Activated T-helper 1 cell treated with anti-CD3 and anti-CD28 coated beads, Interleukin-12 subunit alpha, Interleukin-12 subunit beta, Interleukin-2, Interleukin-4 antibody, amounts not matched to agents 30 ng/mL and 10 ng/mL and 1 ng/mL, durations not matched to agents 14 hours and 24 hours and 36 hours (primary cell): ENCODE measurements at regions of chr7 and their contacts with region 1.

Region 1: DNA sequence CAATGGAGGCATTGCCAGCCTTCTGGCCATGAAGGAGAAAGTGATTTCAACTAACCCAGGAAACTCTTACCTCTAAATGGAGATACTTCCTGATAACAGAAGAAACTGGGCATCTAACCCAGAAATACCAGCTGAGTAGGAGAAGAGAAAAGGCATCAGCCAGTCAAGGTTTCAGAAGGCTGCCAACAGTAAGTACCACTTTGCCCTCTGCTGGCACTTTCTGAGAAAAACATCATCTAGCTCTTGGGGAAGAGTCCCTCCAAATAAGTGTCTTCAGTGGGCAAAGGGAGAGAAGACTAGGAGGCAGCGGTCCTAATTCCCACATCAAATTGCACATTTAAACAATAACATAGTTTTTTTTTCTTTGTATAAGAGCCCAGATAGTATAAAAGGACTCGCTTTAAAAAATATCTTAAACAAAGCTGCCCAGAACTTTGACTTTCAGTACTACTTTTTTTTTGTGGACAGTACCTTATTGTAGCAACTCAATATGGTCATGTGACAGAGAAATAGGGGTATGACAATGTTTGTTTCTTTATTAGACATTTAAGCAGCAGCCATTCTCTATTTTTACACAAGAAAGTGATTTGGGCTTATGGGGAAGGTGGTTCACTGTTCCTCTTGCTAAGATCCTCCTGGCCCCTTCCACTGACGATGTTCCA is 157.3 kb downstream of the CTTNBP2 start:
- DNase-seq: no peak
- H3K4me3 Mint-ChIP-seq: no peak overlapping the region
- H3K27ac Mint-ChIP-seq: no peak overlapping the region
- H3K4me1 Mint-ChIP-seq: no peaks in the 10 kb centered on the region
- H3K27me3 Mint-ChIP-seq: no peaks in the 10 kb centered on the region

Region 2: GRCh38 chr7:117212969-117213877 is 502.7 kb before region 1 on chr7:
- intact Hi-C with region 1: loop called (anchors 5 kb)
- DNase-seq: peak; percentile 9
- H3K4me3 Mint-ChIP-seq: no peak overlapping the region
- H3K27ac Mint-ChIP-seq: no peak overlapping the region
- H3K4me1 Mint-ChIP-seq: no peaks in the 10 kb centered on the region
- H3K27me3 Mint-ChIP-seq: peaks cover 2% of the 10 kb centered on the region

Region 3: GRCh38 chr7:117399820-117400422 is 316.0 kb before region 1 on chr7:
- intact Hi-C with region 1: loop called (anchors 10 kb)
- DNase-seq: no peak
- H3K4me3 Mint-ChIP-seq: no peak overlapping the region
- H3K27ac Mint-ChIP-seq: no peak overlapping the region
- H3K4me1 Mint-ChIP-seq: no peaks in the 10 kb centered on the region
- H3K27me3 Mint-ChIP-seq: no peaks in the 10 kb centered on the region

Region 4: DNA sequence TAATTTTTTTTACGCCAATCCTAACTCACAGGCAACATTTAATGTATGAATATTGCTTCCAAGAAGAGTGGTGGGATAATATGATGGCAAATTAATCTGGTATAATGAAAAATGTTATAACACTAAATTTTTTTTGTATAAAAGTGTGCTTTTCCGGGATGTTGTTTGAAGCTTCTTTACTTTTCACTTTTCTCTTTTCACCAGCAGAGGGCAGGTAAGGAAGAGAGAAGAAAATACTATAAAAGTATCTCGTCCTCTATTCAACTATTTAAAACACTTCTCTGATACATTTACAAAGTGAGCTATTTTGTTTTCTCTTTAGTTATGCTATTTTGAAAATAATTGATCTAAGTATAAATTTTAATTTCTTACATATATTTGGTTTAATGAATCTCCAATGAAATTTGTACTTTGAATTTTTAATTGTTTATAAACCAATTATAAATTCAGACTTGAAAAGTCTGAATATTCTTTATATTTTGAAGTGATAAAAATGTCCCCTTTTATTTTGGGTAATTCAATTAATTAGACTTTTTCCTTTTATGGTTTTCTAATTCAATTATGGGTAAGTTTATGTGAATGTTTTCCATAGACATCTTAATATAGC is 256.8 kb before region 1 on chr7:
- intact Hi-C with region 1: loop called (anchors 1 kb)
- DNase-seq: no peak
- H3K4me3 Mint-ChIP-seq: no peak overlapping the region
- H3K27ac Mint-ChIP-seq: no peak overlapping the region
- H3K4me1 Mint-ChIP-seq: no peaks in the 10 kb centered on the region
- H3K27me3 Mint-ChIP-seq: no peaks in the 10 kb centered on the region

Region 5: GRCh38 chr7:118005026-118005425 is 289.1 kb after region 1 on chr7:
- intact Hi-C with region 1: no loop called
- DNase-seq: no peak
- H3K4me3 Mint-ChIP-seq: no peak overlapping the region
- H3K27ac Mint-ChIP-seq: no peak overlapping the region
- H3K4me1 Mint-ChIP-seq: no peaks in the 10 kb centered on the region
- H3K27me3 Mint-ChIP-seq: no peaks in the 10 kb centered on the region